ENCODE measurements at regions of chr4 and their contacts with region 1.

Region 1: DNA sequence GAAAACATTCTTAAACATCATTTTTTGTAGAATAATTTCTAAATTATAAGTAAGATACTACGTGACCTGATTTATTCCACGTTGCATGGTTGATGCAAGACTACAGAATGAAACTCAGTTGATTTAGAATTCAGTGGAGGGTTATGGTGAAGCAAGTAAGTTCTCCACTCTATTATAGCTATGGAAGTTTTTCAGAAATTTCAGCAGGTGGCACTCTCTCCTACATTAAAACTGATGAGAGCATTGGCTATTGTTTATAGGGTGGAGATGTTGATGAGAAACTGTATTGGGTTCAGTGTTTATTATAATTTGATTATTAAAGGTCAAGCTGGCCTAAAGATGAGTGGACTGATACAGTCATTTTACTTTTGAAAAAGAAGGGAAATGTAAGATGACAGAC is 88.0 kb downstream of the FNIP2 start:
- DNase-seq: no peak
- ATAC-seq: peak; percentile 78
- H3K4me3 ChIP-seq: no peak overlapping the region
- H3K27ac ChIP-seq: no peak overlapping the region
- H3K4me1 ChIP-seq: peaks cover 8% of the 10 kb centered on the region
- H3K27me3 ChIP-seq: no peaks in the 10 kb centered on the region
- CTCF ChIP-seq: peak; percentile 51 to 71 (median 52); a peak in 5 of 6 replicates
- EP300 ChIP-seq: no peak
- POLR2A ChIP-seq: no peak
- RAD21 ChIP-seq: peak; percentile 93

Region 2: DNA sequence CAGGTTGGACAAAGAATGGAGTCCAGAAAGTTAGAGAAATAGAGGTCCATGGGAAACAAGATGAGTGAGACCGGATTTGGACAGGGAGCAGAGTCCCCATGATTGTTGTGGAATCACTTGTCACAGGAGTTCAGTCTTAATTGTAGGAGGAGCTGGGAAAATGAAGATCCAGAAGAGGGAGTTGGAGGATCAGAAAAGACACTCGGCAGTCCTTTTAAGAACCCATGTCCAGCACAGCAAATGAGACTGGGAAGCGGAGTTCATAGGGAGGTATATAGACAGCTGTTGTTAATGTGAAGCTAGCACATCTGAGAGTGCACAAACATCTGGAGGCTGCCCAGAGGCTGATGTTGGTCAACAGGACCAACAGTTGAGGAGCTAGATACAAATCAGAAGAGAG is 446.6 kb before region 1 on chr4:
- CTCF ChIA-PET with region 1: no interaction called
- POLR2A ChIA-PET with region 1: no interaction called
- RAD21 ChIA-PET with region 1: no interaction called
- SMC1A ChIA-PET with region 1: no interaction called
- in situ Hi-C with region 1: no loop called
- intact Hi-C with region 1: no loop called
- DNase-seq: no peak
- ATAC-seq: no peak
- H3K4me3 ChIP-seq: no peak overlapping the region
- H3K27ac ChIP-seq: no peak overlapping the region
- H3K4me1 ChIP-seq: no peaks in the 10 kb centered on the region
- H3K27me3 ChIP-seq: no peaks in the 10 kb centered on the region
- CTCF ChIP-seq: no peak
- EP300 ChIP-seq: no peak
- POLR2A ChIP-seq: no peak
- RAD21 ChIP-seq: peak; percentile 12; the same call in 1 of the 2 replicates

Region 3: DNA sequence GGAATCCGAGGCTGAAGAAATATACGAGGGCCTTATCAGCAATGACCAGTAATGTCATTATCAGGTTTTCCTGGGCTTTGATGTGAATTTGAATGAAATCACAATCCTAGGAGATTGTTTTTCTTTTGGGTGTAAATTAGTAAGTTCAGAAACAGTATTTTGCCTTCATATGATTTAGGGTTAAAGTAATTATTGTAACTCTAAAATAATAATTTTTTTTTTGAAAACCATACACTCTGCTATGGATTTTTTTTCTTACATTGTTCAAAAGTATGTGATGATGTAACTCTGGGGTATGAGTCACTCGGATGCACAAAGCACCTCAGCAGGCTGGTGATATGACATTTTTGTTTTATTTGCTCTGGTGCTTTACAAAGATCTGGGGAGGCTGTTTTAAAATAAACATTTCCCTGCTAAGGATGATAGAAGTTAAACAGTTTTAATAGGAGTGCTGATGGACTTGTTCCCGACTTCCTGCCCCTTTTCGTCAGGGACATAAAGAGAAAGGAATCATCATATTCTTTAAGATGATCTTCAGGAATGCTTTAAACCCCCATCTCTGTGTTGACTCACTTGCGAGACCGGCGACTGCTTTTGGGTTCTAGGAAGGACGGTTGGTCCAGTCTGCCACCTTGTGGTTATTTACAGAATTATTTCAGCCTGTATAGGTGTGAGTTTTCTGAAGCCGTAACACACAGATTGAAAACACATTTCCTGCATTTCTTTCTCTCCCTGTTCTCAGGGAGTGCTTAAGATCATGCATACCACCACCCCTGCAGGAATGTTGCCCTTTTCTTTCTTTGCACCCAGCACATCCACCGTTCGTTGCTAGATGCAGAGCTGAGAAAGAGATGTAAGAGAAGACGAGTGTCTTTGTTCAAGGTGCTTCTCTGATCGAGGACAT is 318.5 kb after region 1 on chr4:
- CTCF ChIA-PET with region 1: interaction called, 54 read pairs
- POLR2A ChIA-PET with region 1: interaction called, 3 read pairs
- RAD21 ChIA-PET with region 1: interaction called, 51 read pairs
- SMC1A ChIA-PET with region 1: interaction called, 69 read pairs
- in situ Hi-C with region 1: loop called (anchors 5 kb)
- intact Hi-C with region 1: loop called (anchors 1 kb)
- DNase-seq: peak; percentile 73
- ATAC-seq: peak; percentile 82
- H3K4me3 ChIP-seq: peak overlapping the region; percentile 60
- H3K27ac ChIP-seq: no peak overlapping the region; the same call in 1 of the 2 replicates
- H3K4me1 ChIP-seq: peaks cover 58% of the 10 kb centered on the region
- H3K27me3 ChIP-seq: no peaks in the 10 kb centered on the region
- CTCF ChIP-seq: peak; percentile 59 to 85 (median 75)
- EP300 ChIP-seq: no peak
- POLR2A ChIP-seq: no peak
- RAD21 ChIP-seq: peak; percentile 98

Region 4: GRCh38 chr4:159185591-159186023 is 328.8 kb after region 1 on chr4:
- CTCF ChIA-PET with region 1: interaction called, 3 read pairs
- POLR2A ChIA-PET with region 1: no interaction called
- RAD21 ChIA-PET with region 1: interaction called, 5 read pairs
- SMC1A ChIA-PET with region 1: interaction called, 69 read pairs
- in situ Hi-C with region 1: no loop called
- intact Hi-C with region 1: no loop called
- DNase-seq: no peak
- ATAC-seq: peak; percentile 66
- H3K4me3 ChIP-seq: no peak overlapping the region
- H3K27ac ChIP-seq: no peak overlapping the region
- H3K4me1 ChIP-seq: no peaks in the 10 kb centered on the region
- H3K27me3 ChIP-seq: no peaks in the 10 kb centered on the region
- CTCF ChIP-seq: no peak
- EP300 ChIP-seq: no peak
- POLR2A ChIP-seq: no peak
- RAD21 ChIP-seq: no peak

Region 5: GRCh38 chr4:159191989-159192388 is 335.1 kb after region 1 on chr4:
- CTCF ChIA-PET with region 1: interaction called, 153 read pairs
- POLR2A ChIA-PET with region 1: no interaction called
- RAD21 ChIA-PET with region 1: interaction called, 4 read pairs
- SMC1A ChIA-PET with region 1: interaction called, 8 read pairs
- in situ Hi-C with region 1: no loop called
- intact Hi-C with region 1: no loop called
- DNase-seq: no peak
- ATAC-seq: no peak
- H3K4me3 ChIP-seq: no peak overlapping the region
- H3K27ac ChIP-seq: no peak overlapping the region
- H3K4me1 ChIP-seq: no peaks in the 10 kb centered on the region
- H3K27me3 ChIP-seq: no peaks in the 10 kb centered on the region
- CTCF ChIP-seq: peak; percentile 19 to 32 (median 31); a peak in 4 of 6 replicates
- EP300 ChIP-seq: no peak
- POLR2A ChIP-seq: no peak
- RAD21 ChIP-seq: peak; percentile 34

Region 6: DNA sequence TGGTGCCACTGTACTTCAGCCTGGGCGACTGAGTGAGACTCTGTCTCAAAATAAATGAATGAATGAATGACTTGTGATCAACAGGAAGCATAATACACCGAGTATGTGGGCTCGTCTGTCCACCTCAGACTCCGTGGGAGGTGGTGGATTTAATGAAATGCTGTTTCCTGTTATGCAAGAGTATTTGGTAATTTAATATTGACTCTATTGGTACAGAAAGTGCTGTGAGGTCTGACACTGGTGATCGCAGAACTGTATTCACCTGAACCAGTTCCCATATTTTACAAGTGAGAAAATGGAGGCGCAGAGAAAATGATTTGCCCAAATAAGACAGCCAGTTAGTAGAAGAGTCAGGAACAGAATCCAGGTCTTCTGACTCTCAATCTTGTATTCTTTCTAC is 669.3 kb after region 1 on chr4:
- CTCF ChIA-PET with region 1: no interaction called
- POLR2A ChIA-PET with region 1: no interaction called
- RAD21 ChIA-PET with region 1: no interaction called
- SMC1A ChIA-PET with region 1: no interaction called
- in situ Hi-C with region 1: no loop called
- intact Hi-C with region 1: no loop called
- DNase-seq: no peak
- ATAC-seq: no peak
- H3K4me3 ChIP-seq: no peak overlapping the region
- H3K27ac ChIP-seq: no peak overlapping the region
- H3K4me1 ChIP-seq: no peaks in the 10 kb centered on the region
- H3K27me3 ChIP-seq: no peaks in the 10 kb centered on the region
- CTCF ChIP-seq: no peak
- EP300 ChIP-seq: no peak
- POLR2A ChIP-seq: no peak
- RAD21 ChIP-seq: no peak

Measured in GM12878 (cell line).